ENCODE measurements at regions of chr2 and their contacts with region 1.

Region 1: DNA sequence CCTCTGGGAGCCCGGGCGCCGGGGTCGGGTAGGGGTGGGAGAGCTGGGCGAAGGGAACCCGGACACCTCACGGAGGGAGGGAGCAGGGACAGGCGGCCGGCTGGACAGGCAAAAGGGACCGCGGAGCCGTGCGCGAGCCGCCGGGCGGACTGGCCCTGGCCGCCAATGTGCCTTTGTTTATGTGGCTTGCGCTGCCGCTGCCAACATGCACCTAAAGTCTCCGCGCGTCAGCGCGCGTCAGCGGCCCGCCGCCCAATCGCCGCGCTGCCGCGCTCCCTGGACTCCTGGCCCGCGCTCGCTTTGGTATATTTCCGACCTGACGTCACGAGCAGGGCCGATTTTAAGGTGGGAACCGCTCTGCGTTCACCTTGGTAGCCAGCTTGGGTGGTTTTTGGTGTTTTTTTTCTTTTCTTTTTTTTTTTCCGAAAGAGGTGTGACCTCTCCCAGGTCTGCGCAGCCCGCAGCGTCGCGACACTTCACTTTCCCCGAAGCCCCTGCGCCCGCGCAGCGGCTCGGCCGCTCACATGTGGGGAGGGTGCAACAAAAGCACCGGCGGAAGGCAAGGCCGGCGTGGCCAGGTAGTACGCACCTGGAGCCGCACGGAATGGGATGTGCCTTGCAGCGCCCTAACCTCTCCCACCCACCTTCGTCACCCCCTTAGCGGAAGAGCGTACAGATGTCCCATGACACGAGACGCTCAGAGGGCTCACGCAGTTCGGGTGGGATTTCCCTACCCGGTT is at the start of gene NR4A2:
- DNase-seq: peak; percentile 93 to 96
- ATAC-seq: peak; percentile 88
- H3K4me3 ChIP-seq: peak within 1 kb of the TSS; percentile 59 to 63
- H3K27ac ChIP-seq: peak within 1 kb of the TSS; percentile 93 to 97
- H3K4me1 ChIP-seq: no peaks in the 10 kb centered on the region
- H3K27me3 ChIP-seq: no peaks in the 10 kb centered on the region
- total RNA-seq, gene NR4A2: 10.4 to 62.0 TPM

Region 2: DNA sequence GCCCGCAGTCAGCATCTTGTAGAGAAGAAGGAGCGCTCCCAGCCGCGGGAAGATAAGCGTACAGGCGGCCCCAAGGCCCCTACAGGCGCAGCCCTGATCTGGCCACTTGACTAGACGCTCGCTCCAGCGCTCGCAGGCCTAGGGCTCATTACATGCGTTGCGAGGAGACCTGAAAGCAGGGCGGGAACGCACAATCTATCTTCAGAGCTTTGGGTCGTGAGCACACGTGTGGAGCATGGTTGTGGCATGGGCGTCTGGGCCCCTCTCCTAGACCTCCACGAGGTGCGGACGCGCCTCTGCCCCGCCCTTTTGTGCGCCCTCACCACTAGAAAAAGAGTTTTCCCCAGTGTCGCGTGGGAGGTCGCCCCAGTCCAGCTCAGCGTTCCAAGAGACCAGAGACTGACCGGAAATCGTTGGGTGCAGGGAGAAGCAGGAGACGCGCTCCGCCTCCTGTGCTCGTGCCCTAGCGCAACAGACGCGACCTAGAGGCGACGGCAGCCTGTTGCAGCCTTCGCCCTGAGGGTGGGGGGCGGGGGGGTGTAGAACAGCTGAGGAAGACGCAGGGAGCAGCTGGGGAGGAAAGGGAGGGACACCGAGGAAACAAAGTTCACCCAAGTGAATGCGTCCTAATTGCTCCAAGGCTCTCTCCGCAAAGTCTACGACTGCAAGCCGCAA is 12.8 kb before region 1 on chr2:
- intact Hi-C with region 1: no loop called
- DNase-seq: peak; percentile 74 to 85
- ATAC-seq: peak; percentile 82
- H3K4me3 ChIP-seq: peak overlapping the region; percentile 14 to 50
- H3K27ac ChIP-seq: peak overlapping the region in 1 of 2 donors; percentile 11
- H3K4me1 ChIP-seq: no peaks in the 10 kb centered on the region
- H3K27me3 ChIP-seq: no peaks in the 10 kb centered on the region

Region 3: DNA sequence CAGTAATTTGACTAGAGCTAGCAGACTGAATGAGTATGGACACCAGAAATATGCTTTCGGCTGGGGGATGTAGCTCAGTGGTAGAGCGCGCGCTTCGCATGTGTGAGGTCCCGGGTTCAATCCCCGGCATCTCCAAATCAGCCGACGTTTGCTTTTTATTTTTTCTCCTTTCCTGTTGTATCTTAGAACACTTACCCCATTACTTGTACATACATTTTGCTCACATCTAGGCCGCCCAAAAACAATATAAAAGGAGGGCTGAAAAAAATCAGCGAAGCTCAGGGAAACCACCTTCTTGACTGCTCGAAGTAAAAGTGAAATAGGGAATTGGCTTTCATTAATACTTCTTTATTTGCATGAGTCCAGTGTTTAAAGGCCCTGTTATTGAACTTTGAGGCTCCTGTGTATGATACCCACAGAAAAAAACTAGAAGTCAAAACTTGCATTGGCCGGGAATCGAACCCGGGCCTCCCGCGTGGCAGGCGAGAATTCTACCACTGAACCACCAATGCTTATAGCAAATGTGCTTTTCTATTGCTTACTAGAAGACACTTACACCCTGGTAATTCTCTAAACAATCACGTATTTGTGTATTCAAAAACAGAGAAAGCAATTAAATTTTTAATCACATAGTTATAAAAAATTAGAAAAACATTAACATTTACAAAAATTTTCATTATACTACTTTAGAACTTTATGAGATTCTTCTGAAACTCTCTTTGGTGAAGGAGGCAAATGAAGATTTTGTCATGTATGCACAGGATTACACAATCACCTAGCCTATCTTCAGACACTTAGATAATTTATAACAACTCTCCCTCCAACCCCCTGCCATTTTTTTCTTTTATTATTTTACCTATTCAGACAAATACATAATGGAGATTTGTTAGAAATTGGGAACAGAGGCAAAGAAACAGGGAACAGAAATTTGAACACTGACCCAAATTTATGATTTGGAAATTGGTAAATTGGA is 68.3 kb after region 1 on chr2:
- intact Hi-C with region 1: loop called (anchors 1 to 5 kb)
- DNase-seq: peak; percentile 64 to 87
- ATAC-seq: peak; percentile 96
- H3K4me3 ChIP-seq: peak overlapping the region; percentile 62 to 99
- H3K27ac ChIP-seq: peak overlapping the region in 1 of 2 donors; percentile 41
- H3K4me1 ChIP-seq: no peaks in the 10 kb centered on the region
- H3K27me3 ChIP-seq: no peaks in the 10 kb centered on the region

Region 4: GRCh38 chr2:156526950-156527636 is 194.4 kb after region 1 on chr2:
- intact Hi-C with region 1: loop called in 1 of 2 experiments (anchors 10 kb)
- DNase-seq: no peak
- ATAC-seq: no peak
- H3K4me3 ChIP-seq: no peak overlapping the region
- H3K27ac ChIP-seq: no peak overlapping the region
- H3K4me1 ChIP-seq: no peaks in the 10 kb centered on the region
- H3K27me3 ChIP-seq: no peaks in the 10 kb centered on the region

Region 5: DNA sequence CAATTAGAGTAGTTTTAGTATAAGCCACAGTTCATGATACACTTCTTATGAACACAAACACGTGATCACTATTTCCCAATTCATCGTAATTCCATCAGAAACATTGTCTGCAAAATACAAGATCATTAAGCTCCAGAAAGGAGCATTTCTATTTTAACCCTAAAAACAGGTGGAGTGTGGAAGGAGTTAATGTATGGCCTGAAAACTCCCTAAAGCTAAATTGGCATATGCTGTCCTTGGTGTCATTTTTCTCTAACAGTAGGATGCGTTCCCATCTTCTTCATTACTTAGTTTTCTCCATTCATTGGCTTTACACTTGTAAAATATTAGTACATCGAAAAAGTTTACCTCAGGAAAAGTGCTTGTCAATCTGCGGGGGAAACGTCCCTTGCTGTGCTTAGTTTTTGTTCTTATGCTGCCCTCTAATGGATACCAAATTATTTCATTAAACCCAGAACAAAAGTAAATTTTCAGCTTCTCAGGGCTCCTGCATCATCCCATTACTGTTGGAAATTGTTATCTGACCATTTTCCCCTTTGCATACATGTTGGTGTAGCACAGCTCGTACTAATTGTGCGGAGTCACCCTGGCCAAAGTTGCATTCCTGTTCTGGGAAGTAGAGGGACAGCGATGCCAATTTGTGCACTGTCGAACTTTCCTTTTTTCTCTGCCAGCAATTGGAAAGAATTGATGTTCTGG is 256.8 kb after region 1 on chr2:
- intact Hi-C with region 1: loop called in 1 of 2 experiments (anchors 5 kb)
- DNase-seq: no peak
- ATAC-seq: peak; percentile 60
- H3K4me3 ChIP-seq: no peak overlapping the region
- H3K27ac ChIP-seq: no peak overlapping the region
- H3K4me1 ChIP-seq: no peaks in the 10 kb centered on the region
- H3K27me3 ChIP-seq: no peaks in the 10 kb centered on the region

Region 6: DNA sequence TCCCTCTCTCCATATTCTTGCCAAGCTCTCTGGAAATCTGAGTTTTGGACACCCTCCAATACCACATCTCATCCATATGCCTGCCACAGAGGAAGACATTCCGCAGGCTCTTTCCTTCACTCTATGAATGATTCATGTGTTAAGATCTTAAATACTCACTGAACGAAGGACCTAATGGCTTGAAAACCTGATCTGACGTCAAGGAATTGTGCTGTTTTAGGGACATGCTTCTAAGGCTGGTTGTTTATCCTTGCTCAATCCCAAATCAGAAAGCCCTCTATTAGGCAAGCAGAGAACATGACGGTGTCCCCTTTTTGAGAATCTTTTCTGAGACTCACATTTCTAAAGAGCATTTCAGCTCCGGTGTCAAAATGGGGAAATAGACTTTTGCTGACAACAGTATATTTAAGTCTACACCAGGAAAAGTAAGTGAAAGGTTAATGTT is 841.1 kb after region 1 on chr2:
- intact Hi-C with region 1: loop called in 1 of 2 experiments (anchors 10 kb)
- DNase-seq: no peak
- ATAC-seq: peak; percentile 32
- H3K4me3 ChIP-seq: peak overlapping the region in 1 of 2 donors; percentile 34
- H3K27ac ChIP-seq: no peak overlapping the region
- H3K4me1 ChIP-seq: peaks cover 0 to under 1% of the 10 kb centered on the region in 2 donors
- H3K27me3 ChIP-seq: no peaks in the 10 kb centered on the region

Region 7: GRCh38 chr2:157261199-157261783 is 928.6 kb after region 1 on chr2:
- intact Hi-C with region 1: loop called in 1 of 2 experiments (anchors 5 kb)
- DNase-seq: no peak
- ATAC-seq: no peak
- H3K4me3 ChIP-seq: no peak overlapping the region
- H3K27ac ChIP-seq: peak overlapping the region in 1 of 2 donors; percentile 37
- H3K4me1 ChIP-seq: peaks cover 4% of the 10 kb centered on the region in 2 donors
- H3K27me3 ChIP-seq: no peaks in the 10 kb centered on the region

Measured in aorta (tissue), 5 donors.